ENCODE measurements at regions of chr17 and their contacts with region 1.

Region 1: DNA sequence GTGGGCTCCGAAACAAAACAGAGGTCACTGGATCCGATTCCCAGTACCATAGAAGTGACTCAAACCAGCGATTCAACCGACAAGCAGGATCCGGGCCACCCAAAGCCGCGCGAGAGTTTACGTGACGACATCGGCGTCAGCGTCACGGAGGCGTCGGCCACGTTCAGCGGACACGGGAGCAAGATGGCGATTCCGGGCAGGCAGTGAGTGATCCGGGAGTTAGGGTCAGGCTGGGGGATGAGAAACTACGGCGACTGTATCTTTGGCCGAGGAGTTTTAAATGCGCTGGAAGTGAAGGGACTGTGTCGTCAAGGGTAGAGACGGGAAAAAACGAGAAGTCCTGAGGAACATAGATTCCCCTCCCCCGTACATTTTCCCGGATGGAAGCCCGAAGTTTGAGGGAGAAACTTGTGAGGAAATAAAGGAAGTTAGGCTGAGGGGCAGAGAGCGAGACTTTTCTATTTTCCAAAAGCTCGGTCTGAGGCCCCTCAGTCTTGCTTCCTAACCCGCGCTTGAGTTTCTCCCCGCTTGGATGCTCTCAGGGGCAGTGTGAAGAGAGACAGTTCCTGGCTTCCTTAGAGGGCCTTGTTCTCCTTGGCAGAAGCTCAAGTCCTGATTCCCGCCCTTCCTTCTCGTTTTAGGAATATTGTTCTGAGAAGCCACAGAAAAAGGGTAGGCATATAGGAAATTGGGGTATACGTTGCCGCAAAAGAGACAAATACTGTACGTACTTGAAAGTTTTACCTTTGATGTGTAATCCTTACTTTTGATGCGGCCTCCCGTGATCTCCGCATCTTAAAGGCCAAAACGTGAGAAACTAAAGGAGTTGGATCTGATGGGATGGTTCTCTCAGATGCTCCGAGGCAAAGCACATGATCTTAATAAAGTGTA is at the start of gene NSRP1:
- DNase-seq: peak; percentile 98
- H3K4me3 Mint-ChIP-seq: peak within 1 kb of the TSS; percentile 97
- H3K27ac Mint-ChIP-seq: peak within 1 kb of the TSS; percentile 99
- H3K4me1 Mint-ChIP-seq: peaks cover 48% of the 10 kb centered on the region
- H3K27me3 Mint-ChIP-seq: no peaks in the 10 kb centered on the region
- total RNA-seq, gene NSRP1: 21.4 to 21.5 TPM

Region 2: DNA sequence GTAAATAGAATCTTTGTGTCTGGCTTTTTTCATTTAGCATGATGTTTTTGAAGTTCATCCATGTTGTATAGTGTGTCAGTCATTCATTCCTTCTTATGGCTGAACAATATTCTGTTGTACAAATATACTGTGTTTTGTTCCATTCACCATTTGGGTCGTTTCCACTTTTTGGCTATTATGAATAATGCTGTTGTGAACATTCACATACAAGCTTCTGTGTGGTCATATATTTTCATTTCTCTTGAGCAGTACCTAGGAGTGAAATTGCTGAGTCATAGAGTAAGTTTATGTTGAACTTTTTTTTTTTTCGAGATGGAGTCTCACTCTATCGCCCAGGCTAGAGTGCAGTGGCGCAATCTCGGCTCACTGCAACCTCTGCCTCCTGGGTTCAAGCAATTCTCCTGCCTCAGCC is 759.1 kb before region 1 on chr17:
- CTCF ChIA-PET with region 1: no interaction called
- intact Hi-C with region 1: no loop called
- DNase-seq: no peak
- H3K4me3 Mint-ChIP-seq: no peak overlapping the region
- H3K27ac Mint-ChIP-seq: no peak overlapping the region
- H3K4me1 Mint-ChIP-seq: no peaks in the 10 kb centered on the region
- H3K27me3 Mint-ChIP-seq: no peaks in the 10 kb centered on the region

Region 3: GRCh38 chr17:29977836-29978235 is 139.1 kb before region 1 on chr17:
- CTCF ChIA-PET with region 1: no interaction called
- intact Hi-C with region 1: no loop called
- DNase-seq: no peak
- H3K4me3 Mint-ChIP-seq: no peak overlapping the region
- H3K27ac Mint-ChIP-seq: no peak overlapping the region
- H3K4me1 Mint-ChIP-seq: no peaks in the 10 kb centered on the region
- H3K27me3 Mint-ChIP-seq: no peaks in the 10 kb centered on the region

Region 4: DNA sequence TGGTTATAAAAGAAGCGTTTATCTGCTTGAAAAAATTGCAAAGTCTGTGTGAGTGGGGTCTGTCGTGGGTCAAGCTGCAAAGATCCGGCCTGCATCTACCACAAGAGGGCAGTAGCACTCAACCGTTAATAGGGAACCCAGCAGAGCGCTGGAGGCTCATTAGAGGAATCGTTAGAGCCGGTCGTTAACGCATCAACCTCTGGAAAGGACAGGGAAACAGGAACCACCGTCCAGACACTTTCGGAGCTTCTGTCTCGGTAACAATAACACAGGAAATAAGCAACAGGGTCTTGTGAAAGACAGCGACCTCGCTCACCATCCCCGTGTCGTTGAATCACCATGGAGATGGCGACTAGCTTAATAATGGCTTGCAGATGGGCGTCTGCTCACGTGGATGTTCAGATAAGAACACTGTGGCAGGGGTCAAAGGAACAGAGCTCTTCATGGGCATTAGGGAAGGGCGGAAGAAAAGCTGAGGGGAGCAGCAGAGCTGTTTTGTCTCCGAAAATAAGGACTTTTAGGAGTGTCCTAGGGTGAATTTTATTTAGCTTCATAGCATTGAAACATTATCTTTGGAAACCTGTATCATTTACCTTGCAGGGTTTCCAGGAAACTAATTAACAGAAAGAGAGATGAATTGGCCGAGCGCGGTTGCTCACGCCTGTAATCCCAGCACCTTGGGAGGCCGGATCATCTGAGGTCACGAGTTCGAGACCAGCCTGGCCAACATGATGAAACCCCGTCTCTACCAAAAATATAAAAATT is 12.1 kb before region 1 on chr17:
- CTCF ChIA-PET with region 1: interaction called, 38 read pairs
- intact Hi-C with region 1: no loop called
- DNase-seq: peak; percentile 84
- H3K4me3 Mint-ChIP-seq: peak overlapping the region; percentile 75
- H3K27ac Mint-ChIP-seq: no peak overlapping the region
- H3K4me1 Mint-ChIP-seq: peaks cover 5% of the 10 kb centered on the region
- H3K27me3 Mint-ChIP-seq: no peaks in the 10 kb centered on the region

Region 5: DNA sequence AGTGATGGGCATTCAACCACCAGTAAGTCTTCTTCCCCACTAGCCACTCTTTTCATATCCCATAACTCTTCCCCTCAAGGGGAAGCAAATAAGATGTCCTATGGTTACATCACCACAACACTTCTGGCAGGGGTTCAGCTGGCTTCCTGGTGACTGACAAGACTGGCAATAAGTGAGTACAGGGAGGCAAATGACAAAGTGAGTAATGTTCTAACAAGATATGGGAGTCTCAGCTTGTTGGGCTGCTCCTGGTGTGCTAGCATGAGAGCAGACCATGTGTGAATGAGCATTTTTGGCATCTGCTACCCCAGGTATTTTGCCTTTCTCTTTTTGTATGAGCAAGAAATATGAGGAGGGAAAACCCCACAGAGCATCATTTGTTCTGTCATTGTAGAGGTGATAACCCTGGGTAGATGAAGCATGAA is 207.0 kb after region 1 on chr17:
- CTCF ChIA-PET with region 1: interaction called, 4 read pairs
- intact Hi-C with region 1: loop called (anchors 2 kb)
- DNase-seq: peak; percentile 84
- H3K4me3 Mint-ChIP-seq: no peak overlapping the region
- H3K27ac Mint-ChIP-seq: peak overlapping the region; percentile 74
- H3K4me1 Mint-ChIP-seq: peaks cover 25% of the 10 kb centered on the region
- H3K27me3 Mint-ChIP-seq: no peaks in the 10 kb centered on the region

Region 6: DNA sequence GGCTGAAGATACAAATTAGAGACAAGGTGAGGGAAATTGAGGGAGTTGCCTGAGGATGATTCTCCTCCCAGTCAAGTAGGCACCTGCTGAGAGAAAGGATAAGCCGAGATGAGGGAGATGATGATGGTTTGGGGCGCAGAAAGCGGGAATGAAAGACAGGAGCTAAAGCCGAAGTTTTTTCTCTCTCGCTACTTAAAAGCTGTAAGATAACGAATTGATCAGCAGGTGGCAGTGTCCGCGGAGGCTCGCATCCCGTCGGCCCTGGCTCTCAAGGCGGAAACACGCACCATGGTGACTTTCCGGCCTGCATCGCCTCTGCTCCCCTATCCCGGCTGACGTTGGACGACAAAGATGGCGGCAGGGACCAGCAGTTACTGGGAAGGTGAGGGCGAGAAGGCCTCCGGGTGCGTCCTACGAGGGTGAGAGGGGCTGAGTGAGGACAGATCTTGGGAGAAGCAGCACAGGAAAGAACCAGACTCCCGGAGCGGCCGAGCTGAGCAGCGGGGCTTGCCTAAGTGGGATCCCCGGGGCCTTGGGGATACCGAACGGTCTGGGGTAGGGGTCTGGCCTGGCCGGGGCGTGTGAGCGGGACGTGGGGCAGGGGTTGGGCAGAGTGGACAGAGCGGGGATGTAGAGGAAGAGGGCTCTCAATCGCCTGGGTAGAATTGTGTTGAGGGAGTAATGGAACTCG is 360.3 kb after region 1 on chr17 and contains the start of gene GOSR1:
- CTCF ChIA-PET with region 1: no interaction called
- intact Hi-C with region 1: loop called (anchors 2 kb)
- DNase-seq: peak; percentile 97
- H3K4me3 Mint-ChIP-seq: peak within 1 kb of the TSS; percentile 98
- H3K27ac Mint-ChIP-seq: peak within 1 kb of the TSS; percentile 97
- H3K4me1 Mint-ChIP-seq: peaks cover 36% of the 10 kb centered on the region
- H3K27me3 Mint-ChIP-seq: peaks cover 2% of the 10 kb centered on the region
- total RNA-seq, gene GOSR1: 33.9 to 37.3 TPM

Region 7: GRCh38 chr17:30701498-30701989 is 584.6 kb after region 1 on chr17:
- CTCF ChIA-PET with region 1: no interaction called
- intact Hi-C with region 1: loop called (anchors 5 kb)
- DNase-seq: no peak
- H3K4me3 Mint-ChIP-seq: no peak overlapping the region
- H3K27ac Mint-ChIP-seq: no peak overlapping the region
- H3K4me1 Mint-ChIP-seq: peaks cover 8% of the 10 kb centered on the region
- H3K27me3 Mint-ChIP-seq: peaks cover 15% of the 10 kb centered on the region

Region 8: GRCh38 chr17:30831663-30832437 is 714.9 kb after region 1 on chr17 and contains the start of gene ATAD5:
- CTCF ChIA-PET with region 1: no interaction called
- intact Hi-C with region 1: loop called (anchors 1 kb)
- DNase-seq: peak; percentile 93
- H3K4me3 Mint-ChIP-seq: peak within 1 kb of the TSS; percentile 97
- H3K27ac Mint-ChIP-seq: peak within 1 kb of the TSS; percentile 90
- H3K4me1 Mint-ChIP-seq: peaks cover 23% of the 10 kb centered on the region
- H3K27me3 Mint-ChIP-seq: no peaks in the 10 kb centered on the region
- total RNA-seq, gene ATAD5: 33.3 to 33.5 TPM